Vagina (tissue), 2 donors: ENCODE measurements at regions of chr10 and their contacts with region 1.

Region 1: GRCh38 chr10:85145966-85146365 is 817.6 kb downstream of the CCSER2 start:
- DNase-seq: no peak
- H3K4me3 ChIP-seq: no peak overlapping the region
- H3K27ac ChIP-seq: no peak overlapping the region
- H3K4me1 ChIP-seq: no peaks in the 10 kb centered on the region
- H3K27me3 ChIP-seq: no peaks in the 10 kb centered on the region
- CTCF ChIP-seq: no peak
- POLR2A ChIP-seq: no peak

Region 2: DNA sequence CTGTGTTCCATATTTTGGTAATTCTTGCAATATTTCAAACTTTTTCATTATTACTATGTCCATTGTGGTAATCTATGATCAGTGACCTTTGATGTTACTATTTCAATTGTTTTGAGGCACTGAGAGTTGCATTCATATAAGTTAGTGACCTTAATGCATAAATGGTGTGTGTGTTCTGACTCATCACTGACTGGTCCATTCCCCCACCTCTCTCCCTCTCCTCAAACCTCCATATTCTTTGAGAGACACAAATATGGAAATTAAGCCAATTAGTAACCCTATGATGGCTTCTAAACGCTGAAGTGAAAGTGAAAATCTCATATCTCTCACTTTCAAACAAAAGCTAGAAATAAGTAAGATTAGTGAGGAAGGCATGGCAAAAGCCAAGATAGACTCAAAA is 78.0 kb before region 1 on chr10:
- intact Hi-C with region 1: no loop called
- DNase-seq: no peak
- H3K4me3 ChIP-seq: no peak overlapping the region
- H3K27ac ChIP-seq: no peak overlapping the region
- H3K4me1 ChIP-seq: no peaks in the 10 kb centered on the region
- H3K27me3 ChIP-seq: no peaks in the 10 kb centered on the region
- CTCF ChIP-seq: no peak
- POLR2A ChIP-seq: no peak

Region 3: GRCh38 chr10:85177767-85178166 is 31.8 kb after region 1 on chr10:
- intact Hi-C with region 1: loop called (anchors 1 kb)
- DNase-seq: no peak
- H3K4me3 ChIP-seq: no peak overlapping the region
- H3K27ac ChIP-seq: no peak overlapping the region
- H3K4me1 ChIP-seq: no peaks in the 10 kb centered on the region
- H3K27me3 ChIP-seq: no peaks in the 10 kb centered on the region
- CTCF ChIP-seq: no peak
- POLR2A ChIP-seq: no peak